ENCODE measurements at regions of chr6 and their contacts with region 1.

Region 1: DNA sequence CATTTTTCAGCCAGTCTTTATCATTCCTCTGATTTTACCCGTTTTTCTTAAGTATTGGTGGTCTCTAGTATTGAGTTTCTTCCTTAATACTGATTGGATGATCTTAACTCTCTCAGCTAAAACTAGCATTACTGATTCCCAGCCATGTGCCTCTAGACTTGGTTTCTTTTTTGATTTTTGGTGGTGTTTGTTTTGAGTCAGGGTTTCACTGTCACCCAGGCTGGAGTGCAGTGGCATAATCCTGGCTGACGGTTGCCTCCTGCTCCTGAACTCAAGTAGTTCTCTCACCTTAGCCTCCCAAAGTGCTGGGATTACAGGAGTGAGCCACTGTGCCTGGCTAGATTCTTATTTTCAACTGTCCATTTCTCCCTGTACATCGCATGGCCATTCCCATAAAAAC is 24.9 kb downstream of the DPPA5 start:
- DNase-seq: no peak

Region 2: DNA sequence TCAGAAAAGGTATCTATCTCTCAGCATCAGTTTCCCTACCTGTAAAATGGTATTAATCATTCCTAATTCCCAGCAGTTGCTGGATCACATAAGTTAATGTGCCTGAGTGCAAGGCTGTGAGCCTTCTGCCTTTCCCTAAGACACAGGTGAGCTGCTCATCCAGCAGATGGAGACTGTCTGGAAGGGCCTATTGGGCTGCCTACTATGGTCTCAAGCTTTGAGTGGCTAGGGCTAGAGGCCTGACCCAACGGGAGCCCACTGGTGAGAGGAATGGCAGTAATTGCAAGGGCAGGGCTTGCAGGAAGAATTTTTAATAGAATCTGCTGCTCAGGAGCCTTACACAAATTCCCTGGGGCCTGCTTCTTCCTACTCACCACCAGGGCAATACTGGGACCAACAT is 70.5 kb before region 1 on chr6:
- intact Hi-C with region 1: no loop called
- DNase-seq: no peak

Region 3: GRCh38 chr6:73285674-73286283 is 43.4 kb before region 1 on chr6:
- intact Hi-C with region 1: loop called (anchors 2 kb)
- DNase-seq: no peak

Region 4: GRCh38 chr6:73418081-73418741 is 89.0 kb after region 1 on chr6:
- intact Hi-C with region 1: no loop called
- DNase-seq: no peak